ENCODE measurements at regions of chr10 and their contacts with region 1.

Region 1: GRCh38 chr10:105262666-105263065 is 621.6 kb downstream of the SORCS3 start:
- DNase-seq: no peak

Region 2: DNA sequence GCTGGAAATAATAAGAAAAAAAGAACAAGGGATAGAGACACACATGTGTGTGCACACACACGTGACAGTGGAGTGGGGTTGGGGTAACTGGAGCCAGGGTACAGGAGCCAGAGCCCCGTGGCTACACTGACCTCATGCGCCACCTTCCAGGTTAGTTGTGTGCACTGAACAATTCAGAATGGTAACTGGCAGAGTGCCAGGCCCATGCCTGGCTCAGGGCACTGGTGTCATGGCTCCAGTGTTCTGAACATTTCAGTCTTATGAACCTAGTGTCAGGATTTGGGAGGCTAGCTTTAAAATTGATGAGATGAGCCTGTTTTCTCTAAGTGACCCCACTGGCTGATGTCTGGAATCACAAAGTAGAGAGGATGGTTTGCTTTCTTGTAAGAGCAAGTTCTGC is 352.0 kb before region 1 on chr10:
- intact Hi-C with region 1: loop called in 1 of 2 experiments (anchors 5 kb)
- DNase-seq: no peak

Region 3: DNA sequence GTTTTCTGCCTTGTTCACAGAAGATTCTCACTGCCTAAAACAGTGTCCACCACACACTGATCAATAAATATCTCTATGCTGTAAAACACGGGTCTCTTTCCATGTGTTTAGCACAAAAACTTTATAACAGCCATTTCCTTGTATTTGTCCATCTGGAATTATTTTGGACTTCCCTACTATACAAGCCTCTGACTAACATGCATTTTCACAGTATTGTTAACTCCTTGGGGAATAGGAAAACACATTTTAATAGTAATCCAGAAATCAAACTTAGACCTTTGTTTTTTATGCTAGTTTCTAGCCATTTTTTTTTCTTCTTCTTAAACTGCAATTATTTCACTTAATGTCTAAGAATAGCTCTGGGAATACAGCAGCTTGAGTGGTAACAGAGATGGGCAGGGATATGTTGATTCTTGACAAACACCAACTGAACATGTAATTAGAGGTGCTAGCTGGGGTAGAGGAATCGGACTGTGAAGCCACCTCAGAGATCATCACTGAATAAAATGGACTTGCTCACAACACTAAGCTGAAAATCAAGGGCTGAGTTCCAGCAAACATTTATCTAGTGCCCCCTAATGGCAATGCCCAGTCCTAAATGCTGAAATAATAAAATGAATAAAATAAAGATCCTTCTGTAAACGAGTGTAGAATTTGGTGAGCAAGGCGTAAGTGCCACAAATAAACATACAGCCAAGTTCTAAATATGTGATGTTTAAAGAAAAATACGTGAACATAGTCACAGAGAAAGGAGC is 1308.7 kb after region 1 on chr10:
- intact Hi-C with region 1: no loop called
- DNase-seq: no peak